Cardiac septum (tissue), 1 donor: ENCODE measurements at regions of chr1 and their contacts with region 1.

Region 1: DNA sequence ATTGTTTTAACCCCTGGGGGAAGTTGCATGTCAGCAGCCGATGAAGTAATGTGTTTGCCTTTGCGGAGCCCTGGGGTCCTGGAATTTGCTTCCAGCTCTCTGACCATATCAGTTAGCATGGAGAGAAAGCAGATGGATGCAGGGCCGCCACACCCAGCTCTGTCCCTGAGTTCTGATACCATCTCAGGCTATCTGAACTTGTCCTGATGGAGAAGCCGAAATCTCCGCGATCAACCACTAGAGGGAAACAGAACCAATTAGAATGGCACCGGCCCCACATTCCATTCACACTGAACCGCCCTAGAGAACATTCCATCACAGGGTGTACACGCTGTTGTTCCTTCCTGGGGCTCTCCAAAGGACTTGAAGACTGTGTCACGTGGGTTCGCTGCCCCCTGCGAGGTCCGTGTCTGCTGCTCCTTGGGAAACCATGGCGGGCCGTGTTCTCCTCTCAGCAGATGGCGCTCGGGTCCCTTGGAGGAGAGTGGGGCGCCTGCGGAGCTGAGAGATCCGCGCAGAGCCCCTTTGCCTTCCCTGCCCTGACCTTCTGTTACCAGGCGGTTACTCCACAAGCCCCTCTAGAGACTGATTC is 75.4 kb downstream of the ABCA4 start:
- DNase-seq: peak; percentile 90

Region 2: DNA sequence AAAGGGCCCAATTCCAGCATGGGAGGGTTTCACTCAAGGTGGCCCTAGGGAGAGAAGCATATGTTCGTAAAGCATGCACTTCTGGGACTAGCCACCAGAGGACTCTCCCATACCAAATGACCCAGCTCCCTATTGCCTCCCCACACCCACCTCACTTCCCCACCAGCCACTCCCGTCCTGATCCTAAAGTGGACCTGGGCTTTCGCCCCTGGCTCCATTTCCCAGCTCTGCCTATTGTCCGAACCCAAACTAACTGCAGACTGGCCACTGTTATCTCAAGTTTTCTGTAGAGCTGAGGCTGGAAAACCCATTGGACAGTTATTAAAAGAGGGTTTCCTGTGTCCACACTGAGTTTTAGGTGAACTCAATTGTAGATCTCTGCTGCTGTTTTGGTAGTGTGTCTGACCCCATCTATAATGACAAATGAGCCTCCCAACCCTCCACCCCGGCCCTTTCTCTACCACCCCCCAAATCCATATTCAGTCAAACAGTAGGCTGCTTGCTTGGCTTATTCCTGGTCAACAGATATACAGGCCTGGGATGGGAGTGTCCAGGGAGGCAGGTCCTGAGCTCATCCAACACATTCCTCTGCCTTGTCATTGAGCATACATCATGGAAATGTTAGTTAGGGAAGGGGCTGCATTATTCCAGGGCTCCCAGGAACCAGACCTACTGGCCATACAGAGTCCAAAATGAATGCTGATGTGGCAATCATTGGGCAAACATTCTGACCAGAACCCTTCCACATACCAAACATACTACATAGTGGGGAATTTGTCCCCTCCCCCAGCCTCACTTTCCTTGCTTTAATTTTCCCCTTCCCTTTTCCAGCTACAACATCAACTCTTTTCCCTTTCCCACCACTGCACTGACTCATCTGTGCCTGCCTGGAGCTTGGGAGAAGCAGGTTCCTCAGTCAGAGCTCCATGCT is 16.2 kb after region 1 on chr1:
- intact Hi-C with region 1: loop called (anchors 2 kb)
- DNase-seq: no peak

Region 3: GRCh38 chr1:94329986-94330385 is 284.4 kb after region 1 on chr1:
- intact Hi-C with region 1: loop called (anchors 5 kb)
- DNase-seq: no peak

Region 4: DNA sequence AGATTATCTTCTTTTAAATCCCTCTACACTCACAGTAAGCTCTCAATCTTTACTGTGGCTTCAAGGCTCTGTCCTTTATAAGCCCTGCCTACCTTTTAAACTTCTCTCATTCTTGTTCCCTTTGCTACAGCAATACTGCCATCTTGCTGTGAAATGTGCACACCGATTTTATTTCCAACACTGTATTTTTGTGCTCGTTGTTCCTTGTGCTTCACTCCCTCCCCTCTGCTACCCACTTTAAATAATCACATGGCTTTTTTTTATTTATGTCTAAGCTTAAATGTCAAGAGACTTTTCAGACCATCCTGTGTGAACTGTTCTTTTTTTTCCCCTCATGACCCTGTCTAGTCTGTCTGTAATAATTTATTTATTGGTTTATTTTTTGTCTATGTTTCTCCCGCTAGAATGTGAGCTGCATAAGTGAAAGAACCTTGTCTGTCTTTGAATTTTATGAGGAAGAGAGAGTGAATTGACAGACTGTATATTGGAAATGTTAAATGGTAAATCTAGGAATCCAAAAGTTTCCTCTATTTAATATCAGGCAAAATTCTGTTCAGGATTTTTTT is 418.3 kb after region 1 on chr1:
- intact Hi-C with region 1: loop called (anchors 5 kb)
- DNase-seq: no peak